CD8-positive, alpha-beta memory T cell (primary cell): ENCODE measurements at regions of chr2 and their contacts with region 1.

Region 1: GRCh38 chr2:196076778-196077568 is 8.3 kb upstream of the DNAH7 start:
- DNase-seq: no peak
- H3K4me3 ChIP-seq: no peak overlapping the region
- H3K4me3 Mint-ChIP-seq: no peak overlapping the region
- H3K27ac ChIP-seq: no peak overlapping the region
- H3K27ac Mint-ChIP-seq: peak overlapping the region in 1 of 8 donors; percentile 34
- H3K4me1 ChIP-seq: peaks cover 11% of the 10 kb centered on the region
- H3K4me1 Mint-ChIP-seq: peaks cover 4 to 40% (median 20%) of the 10 kb centered on the region in 3 donors
- H3K27me3 ChIP-seq: no peaks in the 10 kb centered on the region
- H3K27me3 Mint-ChIP-seq: no peaks in the 10 kb centered on the region

Region 2: DNA sequence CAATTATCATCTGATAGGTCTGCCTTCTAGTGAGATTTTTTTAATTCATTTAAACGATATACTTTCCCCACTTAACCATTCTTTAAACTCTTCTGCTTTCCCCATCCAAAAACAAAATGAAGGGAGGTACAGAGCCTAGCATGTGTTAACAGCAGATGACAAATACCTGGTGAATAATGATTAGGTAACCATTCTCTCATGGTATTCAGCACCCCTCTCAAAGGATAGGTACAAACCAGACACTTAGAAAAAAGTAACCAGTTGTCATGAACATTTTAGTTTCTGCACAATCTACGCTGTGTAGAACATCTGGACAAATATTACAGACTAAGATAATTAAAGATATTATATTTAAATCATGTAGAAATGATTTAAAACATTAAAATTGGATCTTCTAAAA is 64.7 kb before region 1 on chr2:
- CTCF ChIA-PET with region 1: no interaction called
- POLR2A ChIA-PET with region 1: no interaction called
- DNase-seq: no peak
- H3K4me3 ChIP-seq: no peak overlapping the region
- H3K4me3 Mint-ChIP-seq: no peak overlapping the region
- H3K27ac ChIP-seq: no peak overlapping the region
- H3K27ac Mint-ChIP-seq: no peak overlapping the region
- H3K4me1 ChIP-seq: no peaks in the 10 kb centered on the region
- H3K4me1 Mint-ChIP-seq: no peaks in the 10 kb centered on the region
- H3K27me3 ChIP-seq: no peaks in the 10 kb centered on the region
- H3K27me3 Mint-ChIP-seq: peaks cover 7 to 23% of the 10 kb centered on the region in 2 donors

Region 3: GRCh38 chr2:196119926-196120325 is 43.0 kb after region 1 on chr2:
- CTCF ChIA-PET with region 1: interaction called, 11 read pairs
- POLR2A ChIA-PET with region 1: no interaction called
- DNase-seq: no peak
- H3K4me3 ChIP-seq: no peak overlapping the region
- H3K4me3 Mint-ChIP-seq: no peak overlapping the region
- H3K27ac ChIP-seq: no peak overlapping the region
- H3K27ac Mint-ChIP-seq: no peak overlapping the region
- H3K4me1 ChIP-seq: no peaks in the 10 kb centered on the region
- H3K4me1 Mint-ChIP-seq: no peaks in the 10 kb centered on the region
- H3K27me3 ChIP-seq: no peaks in the 10 kb centered on the region
- H3K27me3 Mint-ChIP-seq: no peaks in the 10 kb centered on the region

Region 4: DNA sequence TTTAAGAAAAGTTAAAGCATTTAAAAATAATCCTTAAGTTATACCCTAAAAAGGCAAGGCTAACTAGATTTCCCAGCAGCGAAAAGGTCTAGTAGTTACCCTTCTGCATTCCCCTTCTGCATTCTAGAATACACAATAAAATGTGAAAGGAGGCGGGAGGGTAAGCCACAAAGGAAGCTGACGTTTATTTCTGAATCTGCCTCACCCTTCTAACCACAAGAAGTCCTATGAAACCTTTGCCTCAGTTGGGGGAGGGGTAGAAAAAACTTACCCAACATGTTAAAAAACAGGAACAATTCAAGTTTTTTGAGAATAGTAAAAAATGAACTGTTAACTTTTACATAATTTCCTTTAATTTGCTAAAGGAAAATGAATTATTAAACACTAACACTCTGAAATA is 83.1 kb after region 1 on chr2:
- CTCF ChIA-PET with region 1: interaction called, 30 read pairs
- POLR2A ChIA-PET with region 1: no interaction called
- DNase-seq: peak; percentile 36 to 90 (median 80)
- H3K4me3 ChIP-seq: peak overlapping the region; percentile 9
- H3K4me3 Mint-ChIP-seq: peak overlapping the region; percentile 72 to 96 (median 85)
- H3K27ac ChIP-seq: peak overlapping the region; percentile 45
- H3K27ac Mint-ChIP-seq: peak overlapping the region; percentile 71 to 99 (median 98)
- H3K4me1 ChIP-seq: peaks cover 88% of the 10 kb centered on the region
- H3K4me1 Mint-ChIP-seq: peaks cover 78 to 97% (median 93%) of the 10 kb centered on the region in 3 donors
- H3K27me3 ChIP-seq: no peaks in the 10 kb centered on the region
- H3K27me3 Mint-ChIP-seq: peaks cover 0 to 4% of the 10 kb centered on the region in 2 donors

Region 5: GRCh38 chr2:196215376-196215775 is 138.4 kb after region 1 on chr2:
- CTCF ChIA-PET with region 1: interaction called, 43 read pairs
- POLR2A ChIA-PET with region 1: interaction called, 3 read pairs
- DNase-seq: no peak
- H3K4me3 ChIP-seq: no peak overlapping the region
- H3K4me3 Mint-ChIP-seq: no peak overlapping the region
- H3K27ac ChIP-seq: no peak overlapping the region
- H3K27ac Mint-ChIP-seq: peak overlapping the region in 2 of 8 donors; percentile 18 to 61
- H3K4me1 ChIP-seq: peaks cover 61% of the 10 kb centered on the region
- H3K4me1 Mint-ChIP-seq: peaks cover 45 to 86% (median 73%) of the 10 kb centered on the region in 3 donors
- H3K27me3 ChIP-seq: no peaks in the 10 kb centered on the region
- H3K27me3 Mint-ChIP-seq: no peaks in the 10 kb centered on the region

Region 6: DNA sequence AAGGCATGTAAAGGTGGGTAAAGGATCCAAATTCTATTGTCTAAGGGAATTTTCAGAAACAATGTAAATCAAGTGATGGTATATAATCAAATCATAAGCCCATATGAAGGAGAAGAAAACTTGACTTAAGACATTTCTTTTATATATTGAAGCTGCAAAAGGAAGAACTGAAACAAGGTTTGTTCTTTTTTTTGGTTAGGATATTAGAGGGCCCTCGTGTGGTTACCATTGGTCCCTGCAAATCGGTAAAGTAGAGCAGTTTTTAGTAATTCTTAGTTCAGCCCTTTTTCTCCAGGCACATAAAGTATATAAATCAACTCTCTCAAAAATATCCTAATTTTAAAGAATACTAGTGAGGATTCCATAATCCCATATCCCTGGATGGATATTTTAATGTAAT is 200.0 kb after region 1 on chr2:
- CTCF ChIA-PET with region 1: interaction called, 70 read pairs
- POLR2A ChIA-PET with region 1: interaction called, 5 read pairs
- DNase-seq: peak in 3 of 5 donors; percentile 51 to 63 (median 52)
- H3K4me3 ChIP-seq: no peak overlapping the region
- H3K4me3 Mint-ChIP-seq: peak overlapping the region in 5 of 7 donors; percentile 6 to 70 (median 36)
- H3K27ac ChIP-seq: no peak overlapping the region
- H3K27ac Mint-ChIP-seq: peak overlapping the region in 6 of 8 donors; percentile 11 to 84 (median 40)
- H3K4me1 ChIP-seq: peaks cover 34% of the 10 kb centered on the region
- H3K4me1 Mint-ChIP-seq: peaks cover 34 to 39% (median 37%) of the 10 kb centered on the region in 3 donors
- H3K27me3 ChIP-seq: no peaks in the 10 kb centered on the region
- H3K27me3 Mint-ChIP-seq: peaks cover 3 to 5% of the 10 kb centered on the region in 2 donors

Region 7: DNA sequence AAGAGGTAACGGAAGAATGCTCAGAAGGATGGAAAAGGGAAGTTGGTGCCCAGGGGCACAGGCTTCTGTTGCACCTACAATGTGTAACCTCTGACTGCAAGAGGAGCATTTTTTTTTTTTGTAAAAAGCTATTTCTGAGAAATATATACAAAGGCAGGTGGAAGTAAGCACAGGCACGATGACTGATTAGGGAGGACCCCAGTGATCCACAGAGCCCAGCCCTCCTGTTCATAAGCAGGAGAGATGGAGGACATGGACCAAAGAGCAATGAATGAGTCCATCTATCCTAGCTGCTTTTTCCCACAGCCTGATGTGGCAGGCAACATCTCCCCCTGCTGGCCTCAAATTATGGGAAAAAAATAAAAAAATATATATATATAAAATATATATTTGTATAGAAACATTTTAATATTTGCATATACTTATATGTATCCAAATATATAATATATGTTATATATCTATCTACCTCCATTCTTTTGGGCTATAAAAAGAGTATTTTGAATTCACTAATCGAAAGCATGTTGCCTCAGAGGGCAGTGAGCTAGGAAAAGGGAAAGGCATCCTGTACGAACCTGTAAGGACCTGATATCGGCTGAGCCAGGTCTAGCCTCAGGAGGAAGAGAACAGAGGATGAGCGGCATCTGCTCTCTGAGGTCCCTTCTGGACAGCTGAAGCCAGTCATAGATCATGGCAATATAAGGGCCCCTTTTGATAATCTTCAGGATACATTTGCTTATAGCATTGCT is 260.4 kb after region 1 on chr2:
- CTCF ChIA-PET with region 1: interaction called, 56 read pairs
- POLR2A ChIA-PET with region 1: no interaction called
- DNase-seq: peak in 2 of 5 donors; percentile 2 to 23
- H3K4me3 ChIP-seq: no peak overlapping the region
- H3K4me3 Mint-ChIP-seq: no peak overlapping the region
- H3K27ac ChIP-seq: no peak overlapping the region
- H3K27ac Mint-ChIP-seq: peak overlapping the region in 1 of 8 donors; percentile 34
- H3K4me1 ChIP-seq: no peaks in the 10 kb centered on the region
- H3K4me1 Mint-ChIP-seq: peaks cover 0 to 4% (median 0%) of the 10 kb centered on the region in 3 donors
- H3K27me3 ChIP-seq: no peaks in the 10 kb centered on the region
- H3K27me3 Mint-ChIP-seq: peaks cover 3 to 14% of the 10 kb centered on the region in 2 donors

Region 8: GRCh38 chr2:196453613-196454047 is 376.7 kb after region 1 on chr2:
- CTCF ChIA-PET with region 1: interaction called, 30 read pairs
- POLR2A ChIA-PET with region 1: no interaction called
- DNase-seq: peak in 4 of 5 donors; percentile 7 to 47 (median 17)
- H3K4me3 ChIP-seq: no peak overlapping the region
- H3K4me3 Mint-ChIP-seq: no peak overlapping the region
- H3K27ac ChIP-seq: no peak overlapping the region
- H3K27ac Mint-ChIP-seq: no peak overlapping the region
- H3K4me1 ChIP-seq: no peaks in the 10 kb centered on the region
- H3K4me1 Mint-ChIP-seq: no peaks in the 10 kb centered on the region
- H3K27me3 ChIP-seq: no peaks in the 10 kb centered on the region
- H3K27me3 Mint-ChIP-seq: peaks cover 14 to 39% of the 10 kb centered on the region in 2 donors